Activated B cell treated with CpG ODN at 0.5 μM for 24 hours (primary cell): ENCODE measurements at regions of chr11 and their contacts with region 1.

Region 1: GRCh38 chr11:86228269-86229220 is 16.0 kb upstream of the EED start:
- DNase-seq: no peak
- ATAC-seq: no peak
- H3K4me3 Mint-ChIP-seq: no peak overlapping the region
- H3K27ac Mint-ChIP-seq: no peak overlapping the region
- H3K4me1 Mint-ChIP-seq: peaks cover 17% of the 10 kb centered on the region
- H3K27me3 Mint-ChIP-seq: no peaks in the 10 kb centered on the region
- CTCF ChIP-seq: no peak

Region 2: GRCh38 chr11:86202013-86202336 is 26.6 kb before region 1 on chr11:
- CTCF ChIA-PET with region 1: no interaction called
- POLR2A ChIA-PET with region 1: interaction called, 3 read pairs
- intact Hi-C with region 1: loop called (anchors 1 kb)
- DNase-seq: no peak
- ATAC-seq: peak; percentile 46
- H3K4me3 Mint-ChIP-seq: no peak overlapping the region
- H3K27ac Mint-ChIP-seq: no peak overlapping the region
- H3K4me1 Mint-ChIP-seq: peaks cover 9% of the 10 kb centered on the region
- H3K27me3 Mint-ChIP-seq: no peaks in the 10 kb centered on the region
- CTCF ChIP-seq: no peak